ENCODE measurements at regions of chr9 and their contacts with region 1.

Region 1: DNA sequence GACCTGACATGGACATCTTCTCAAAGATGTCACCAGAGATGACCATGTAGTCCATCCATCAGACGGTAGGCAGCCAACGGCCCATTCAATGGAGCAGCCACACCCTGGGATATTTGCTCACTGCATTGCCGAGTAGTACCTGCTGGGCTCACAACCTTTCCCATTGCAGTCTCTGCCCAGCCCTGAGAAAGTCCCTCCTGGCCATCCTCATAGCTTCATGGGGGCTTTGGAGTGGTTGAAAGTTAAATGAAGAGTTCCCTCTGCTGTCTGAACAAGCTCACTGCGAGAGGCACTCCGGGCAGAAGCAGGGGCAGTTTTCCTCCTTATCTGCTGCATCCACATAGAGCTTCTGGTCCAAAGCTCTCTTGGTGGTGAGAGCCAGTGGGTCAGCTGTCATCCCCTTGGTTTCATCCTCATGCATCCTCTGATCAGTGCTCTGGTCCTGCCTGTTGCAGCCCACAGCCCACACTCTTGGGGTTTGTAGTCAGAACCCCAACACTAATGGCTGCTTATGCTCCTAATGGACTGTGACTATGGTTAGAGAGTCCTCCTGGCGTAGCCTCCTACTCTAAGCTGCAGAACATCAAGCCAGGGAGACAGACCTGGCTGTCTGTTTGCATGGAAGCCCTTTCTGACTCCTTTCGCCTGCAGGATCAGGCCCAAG is 23.4 kb downstream of the TNFSF8 start:
- DNase-seq: peak; percentile 66 to 79
- H3K4me3 ChIP-seq: no peak overlapping the region
- H3K4me3 Mint-ChIP-seq: no peak overlapping the region
- H3K27ac Mint-ChIP-seq: peak overlapping the region; percentile 92
- H3K4me1 ChIP-seq: peaks cover 35% of the 10 kb centered on the region
- H3K4me1 Mint-ChIP-seq: peaks cover 34% of the 10 kb centered on the region
- H3K27me3 ChIP-seq: no peaks in the 10 kb centered on the region
- H3K27me3 Mint-ChIP-seq: no peaks in the 10 kb centered on the region
- CTCF ChIP-seq: peak; percentile 63 to 71

Region 2: GRCh38 chr9:114681594-114682332 is 225.3 kb before region 1 on chr9 and contains the start of gene TEX48:
- CTCF ChIA-PET with region 1: interaction called, 4 read pairs
- POLR2A ChIA-PET with region 1: no interaction called
- intact Hi-C with region 1: loop called (anchors 1 kb)
- DNase-seq: peak; percentile 73 to 83
- H3K4me3 ChIP-seq: no peak within 1 kb of the TSS
- H3K4me3 Mint-ChIP-seq: no peak within 1 kb of the TSS
- H3K27ac Mint-ChIP-seq: no peak within 1 kb of the TSS
- H3K4me1 ChIP-seq: no peaks in the 10 kb centered on the region; the same call in 1 of the 2 replicates
- H3K4me1 Mint-ChIP-seq: peaks cover 16% of the 10 kb centered on the region
- H3K27me3 ChIP-seq: no peaks in the 10 kb centered on the region
- H3K27me3 Mint-ChIP-seq: no peaks in the 10 kb centered on the region
- CTCF ChIP-seq: peak; percentile 80 to 86
- total RNA-seq, gene TEX48: not detected in 2 replicates

Region 3: GRCh38 chr9:114746601-114747346 is 160.3 kb before region 1 on chr9:
- CTCF ChIA-PET with region 1: interaction called, 4 read pairs
- POLR2A ChIA-PET with region 1: no interaction called
- intact Hi-C with region 1: loop called (anchors 1 kb)
- DNase-seq: no peak
- H3K4me3 ChIP-seq: no peak overlapping the region
- H3K4me3 Mint-ChIP-seq: no peak overlapping the region
- H3K27ac Mint-ChIP-seq: no peak overlapping the region
- H3K4me1 ChIP-seq: no peaks in the 10 kb centered on the region
- H3K4me1 Mint-ChIP-seq: no peaks in the 10 kb centered on the region
- H3K27me3 ChIP-seq: no peaks in the 10 kb centered on the region
- H3K27me3 Mint-ChIP-seq: no peaks in the 10 kb centered on the region
- CTCF ChIP-seq: no peak

Region 4: DNA sequence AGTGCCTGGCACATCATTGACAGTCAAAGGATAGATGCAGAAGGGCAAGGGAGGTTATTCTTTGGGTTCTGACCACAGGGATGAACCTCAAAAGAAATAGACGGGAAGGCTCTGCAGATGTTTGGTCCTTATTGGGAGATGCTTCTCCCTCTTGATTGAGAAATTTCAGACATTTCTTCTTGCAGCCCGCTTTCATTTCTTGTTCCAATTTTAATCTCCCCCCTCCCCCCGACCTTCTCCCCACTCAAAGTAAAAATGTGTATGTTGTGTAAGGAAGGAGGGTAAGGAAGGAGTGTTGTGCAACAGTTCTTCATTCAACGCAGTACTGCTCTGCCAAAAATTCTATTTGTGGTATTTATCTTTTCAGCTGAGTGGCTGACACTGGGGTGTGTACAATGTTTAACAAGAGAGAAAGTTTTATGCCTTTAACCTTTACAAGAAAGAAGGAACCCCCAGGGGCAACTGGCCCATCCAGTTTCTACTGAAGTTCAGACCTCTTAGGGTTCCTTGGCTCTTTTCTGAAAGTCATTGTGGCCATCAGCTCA is 54.9 kb before region 1 on chr9:
- CTCF ChIA-PET with region 1: no interaction called
- POLR2A ChIA-PET with region 1: no interaction called
- intact Hi-C with region 1: loop called (anchors 1 kb)
- DNase-seq: peak; percentile 5 to 43
- H3K4me3 ChIP-seq: no peak overlapping the region
- H3K4me3 Mint-ChIP-seq: no peak overlapping the region
- H3K27ac Mint-ChIP-seq: no peak overlapping the region
- H3K4me1 ChIP-seq: peaks cover 26% of the 10 kb centered on the region
- H3K4me1 Mint-ChIP-seq: peaks cover 24% of the 10 kb centered on the region
- H3K27me3 ChIP-seq: no peaks in the 10 kb centered on the region
- H3K27me3 Mint-ChIP-seq: no peaks in the 10 kb centered on the region
- CTCF ChIP-seq: no peak

Region 5: DNA sequence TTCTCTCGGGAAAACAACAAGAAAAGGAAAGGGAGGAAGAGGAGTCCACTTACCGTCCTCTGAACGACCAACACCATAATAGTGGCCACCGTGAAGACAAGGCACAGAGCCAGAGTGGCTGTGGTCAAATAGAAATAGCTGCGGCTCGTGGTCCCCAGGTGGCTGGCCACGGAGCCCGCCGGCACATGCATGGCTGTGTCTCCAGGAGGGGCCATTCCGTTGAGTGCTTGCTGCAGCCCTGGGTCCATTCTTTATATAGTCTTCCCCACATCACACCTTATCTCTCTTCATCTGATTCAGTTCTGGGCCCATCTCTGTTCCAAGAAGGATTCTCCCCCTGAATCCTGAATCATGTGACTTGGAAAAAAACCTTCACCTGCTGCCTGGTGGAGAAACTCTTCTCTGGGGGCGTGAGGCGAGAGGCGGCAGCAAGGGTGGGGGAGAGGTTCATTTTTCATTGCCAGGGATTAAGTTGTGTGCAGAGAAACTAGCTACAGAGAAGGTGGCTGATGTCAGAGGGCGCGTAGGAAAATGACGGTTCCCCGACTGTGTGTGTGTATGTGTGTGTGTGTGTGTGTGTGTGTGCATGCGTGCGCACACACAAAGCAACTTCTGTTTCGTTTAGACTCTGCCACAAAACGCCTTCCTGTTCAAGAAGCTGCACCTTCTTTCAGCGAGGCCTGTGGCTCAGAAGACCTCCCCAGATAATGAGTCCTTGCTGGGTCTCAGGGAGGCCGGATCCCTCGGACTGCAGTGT is 23.2 kb after region 1 on chr9 and contains the start of gene TNFSF8:
- CTCF ChIA-PET with region 1: no interaction called
- POLR2A ChIA-PET with region 1: no interaction called
- intact Hi-C with region 1: loop called (anchors 1 kb)
- DNase-seq: no peak
- H3K4me3 ChIP-seq: no peak within 1 kb of the TSS
- H3K4me3 Mint-ChIP-seq: no peak within 1 kb of the TSS
- H3K27ac Mint-ChIP-seq: no peak within 1 kb of the TSS
- H3K4me1 ChIP-seq: peaks cover 23% of the 10 kb centered on the region; the same call in 1 of the 2 replicates
- H3K4me1 Mint-ChIP-seq: peaks cover 14% of the 10 kb centered on the region
- H3K27me3 ChIP-seq: no peaks in the 10 kb centered on the region; the same call in 1 of the 2 replicates
- H3K27me3 Mint-ChIP-seq: no peaks in the 10 kb centered on the region
- CTCF ChIP-seq: no peak
- total RNA-seq, gene TNFSF8: 0.20 TPM in 1 of 2 replicates, not detected in the other

Region 6: GRCh38 chr9:115024969-115025427 is 118.0 kb after region 1 on chr9:
- CTCF ChIA-PET with region 1: no interaction called
- POLR2A ChIA-PET with region 1: no interaction called
- intact Hi-C with region 1: loop called (anchors 1 kb)
- DNase-seq: peak; percentile 52 to 68
- H3K4me3 ChIP-seq: no peak overlapping the region
- H3K4me3 Mint-ChIP-seq: no peak overlapping the region
- H3K27ac Mint-ChIP-seq: peak overlapping the region; percentile 62
- H3K4me1 ChIP-seq: peaks cover 58% of the 10 kb centered on the region
- H3K4me1 Mint-ChIP-seq: peaks cover 43% of the 10 kb centered on the region
- H3K27me3 ChIP-seq: no peaks in the 10 kb centered on the region
- H3K27me3 Mint-ChIP-seq: no peaks in the 10 kb centered on the region
- CTCF ChIP-seq: no peak